ENCODE measurements at regions of chr20 and their contacts with region 1.

Region 1: DNA sequence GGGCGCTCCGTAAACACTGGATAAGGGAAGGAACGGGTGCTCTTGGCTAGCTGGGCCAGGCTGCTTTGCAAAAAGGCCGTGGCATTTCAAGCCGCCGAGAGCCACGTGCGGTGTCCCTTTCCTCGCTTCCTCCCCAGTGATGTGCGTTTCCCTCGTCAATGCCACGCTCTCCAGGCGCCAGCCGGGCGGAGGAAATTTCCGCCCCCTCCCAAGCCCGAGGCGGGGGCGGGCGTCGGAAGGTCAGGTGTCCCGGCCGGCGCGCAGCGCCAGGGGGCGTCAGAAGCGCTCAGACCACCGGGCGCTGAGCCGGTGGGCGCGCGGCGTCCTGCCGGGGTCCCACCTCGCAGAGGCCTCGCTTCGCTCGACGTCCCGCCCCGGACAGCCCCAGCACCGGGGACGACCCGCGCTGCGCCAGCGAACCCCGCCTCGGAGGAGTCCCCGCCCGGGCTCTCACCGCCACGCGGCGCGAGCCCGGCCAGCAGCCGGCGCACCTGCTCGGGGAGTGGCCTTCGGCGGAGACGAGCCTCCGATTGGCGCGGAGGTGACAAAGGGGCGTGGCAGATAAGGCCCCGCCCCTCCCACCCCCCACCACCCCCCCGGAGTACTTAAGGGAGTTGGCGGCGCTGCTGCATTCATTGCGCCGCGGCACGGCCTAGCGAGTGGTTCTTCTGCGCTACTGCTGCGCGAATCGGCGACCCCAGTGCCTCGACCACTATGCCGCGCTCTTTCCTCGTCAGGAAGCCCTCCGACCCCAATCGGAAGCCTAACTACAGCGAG is at the start of gene SNAI1:
- DNase-seq: peak; percentile 77 to 81
- ATAC-seq: peak; percentile 85 to 88 (median 87)
- H3K4me3 ChIP-seq: peak within 1 kb of the TSS; percentile 36 to 75 (median 63)
- H3K27ac ChIP-seq: peak within 1 kb of the TSS in 9 of 10 donors; percentile 66 to 88 (median 80)
- H3K4me1 ChIP-seq: peaks cover 15 to 66% (median 56%) of the 10 kb centered on the region in 9 donors
- H3K27me3 ChIP-seq: peaks cover 0 to 10% (median 0%) of the 10 kb centered on the region in 7 donors
- CTCF ChIP-seq: peak; percentile 41 to 88 (median 61)
- total RNA-seq, gene SNAI1: 0.59 to 7.6 (median 2.8) TPM

Region 2: DNA sequence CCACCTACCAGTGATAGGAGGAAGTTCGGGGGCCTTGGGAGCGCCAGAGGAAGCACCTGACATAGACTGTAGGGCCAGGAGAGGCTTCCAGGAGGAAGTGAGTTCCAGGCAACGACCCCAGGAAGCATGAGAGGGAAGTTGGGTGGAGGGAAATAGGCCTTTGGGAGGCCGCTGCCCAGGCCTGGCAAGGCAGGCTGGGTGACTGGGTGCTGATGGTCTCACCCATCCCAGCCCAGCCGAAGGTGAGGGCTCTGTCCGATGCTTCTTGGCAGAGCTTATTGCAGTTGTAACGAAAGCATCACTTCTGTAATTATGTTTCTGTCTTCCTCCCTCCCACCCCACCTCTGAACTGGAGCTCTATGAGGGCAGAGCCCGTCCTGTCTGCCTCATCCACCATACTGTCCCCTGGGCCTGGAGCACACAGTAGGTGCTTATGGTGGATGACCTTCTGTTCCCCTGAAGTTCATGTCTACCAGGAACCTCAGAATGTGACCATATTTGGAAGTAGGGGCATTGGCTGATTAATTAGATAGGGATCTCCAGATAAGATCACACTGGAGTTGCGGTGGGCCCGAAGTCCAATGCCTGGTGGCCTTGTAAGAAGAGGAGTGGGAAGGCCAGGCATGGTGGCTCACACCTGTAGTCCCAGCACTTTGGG is 76.3 kb after region 1 on chr20:
- intact Hi-C with region 1: no loop called
- DNase-seq: no peak
- ATAC-seq: peak in 3 of 8 donors; percentile 16 to 36 (median 16)
- H3K4me3 ChIP-seq: no peak overlapping the region
- H3K27ac ChIP-seq: no peak overlapping the region
- H3K4me1 ChIP-seq: peaks cover 7 to 20% (median 10%) of the 10 kb centered on the region in 9 donors
- H3K27me3 ChIP-seq: no peaks in the 10 kb centered on the region
- CTCF ChIP-seq: no peak

Region 3: GRCh38 chr20:50070991-50071888 is 88.7 kb after region 1 on chr20:
- intact Hi-C with region 1: loop called (anchors 1 to 2 kb)
- DNase-seq: peak; percentile 85 to 94
- ATAC-seq: peak; percentile 90 to 96 (median 95)
- H3K4me3 ChIP-seq: peak overlapping the region in 9 of 10 donors; percentile 4 to 53 (median 47)
- H3K27ac ChIP-seq: peak overlapping the region in 1 of 10 donors; percentile 73
- H3K4me1 ChIP-seq: peaks cover 0 to 25% (median 8%) of the 10 kb centered on the region in 9 donors
- H3K27me3 ChIP-seq: no peaks in the 10 kb centered on the region
- CTCF ChIP-seq: peak; percentile 99 to 100 (median 100)

Region 4: DNA sequence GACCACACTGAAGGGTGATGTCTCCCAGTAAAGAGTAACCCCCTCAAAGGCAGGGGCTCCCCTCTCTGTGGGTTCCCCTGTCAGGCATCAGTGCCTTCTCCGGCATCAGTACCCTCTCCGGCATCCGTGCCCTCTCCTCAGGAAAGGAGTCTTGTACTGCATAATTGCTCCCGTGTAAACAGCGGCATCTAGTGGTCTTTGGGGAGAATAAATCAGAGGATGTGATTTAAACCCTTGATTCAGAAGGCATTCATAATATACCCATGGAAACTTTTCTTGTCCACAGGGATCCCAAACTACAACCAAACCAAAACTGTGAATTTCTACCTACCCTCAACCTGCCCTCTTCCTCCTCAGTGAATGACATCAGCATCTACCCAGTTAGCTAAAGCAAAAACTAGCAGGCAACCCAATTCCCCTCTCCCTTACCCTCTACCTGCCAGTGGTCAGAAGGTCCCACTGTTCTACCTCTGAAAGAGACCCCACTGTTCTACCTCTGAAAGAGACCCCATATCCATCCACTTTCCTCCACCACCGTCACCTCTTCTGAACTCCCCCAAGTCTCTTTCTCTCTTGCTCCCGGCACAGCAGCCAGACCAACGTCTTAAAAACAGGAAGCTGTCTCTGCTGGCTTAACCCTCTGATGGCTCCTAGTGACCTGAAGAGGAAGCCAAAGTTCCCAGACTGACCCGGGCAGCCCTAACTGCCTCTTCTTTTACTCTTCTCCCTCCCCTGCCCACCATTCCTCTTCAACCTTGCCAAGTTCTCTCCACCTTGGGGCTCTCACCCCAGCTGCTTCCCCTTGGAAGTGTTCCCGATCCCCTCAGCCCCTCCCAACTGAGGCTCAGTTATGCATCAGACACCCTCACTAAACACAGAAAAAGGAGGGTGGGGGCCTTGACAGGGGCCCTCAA is 103.2 kb after region 1 on chr20:
- intact Hi-C with region 1: loop called in 1 of 10 experiments (anchors 5 kb)
- DNase-seq: peak in 1 of 2 donors; percentile 46
- ATAC-seq: peak; percentile 55 to 88 (median 75)
- H3K4me3 ChIP-seq: peak overlapping the region in 6 of 10 donors; percentile 30 to 43 (median 36)
- H3K27ac ChIP-seq: peak overlapping the region in 8 of 10 donors; percentile 41 to 81 (median 52)
- H3K4me1 ChIP-seq: peaks cover 5 to 64% (median 28%) of the 10 kb centered on the region in 9 donors
- H3K27me3 ChIP-seq: no peaks in the 10 kb centered on the region
- CTCF ChIP-seq: peak; percentile 66 to 88 (median 86)

Region 5: GRCh38 chr20:50165684-50166554 is 183.4 kb after region 1 on chr20:
- intact Hi-C with region 1: loop called in 8 of 10 experiments (anchors 2 to 5 kb)
- DNase-seq: peak; percentile 92 to 98
- ATAC-seq: peak; percentile 95 to 99 (median 98)
- H3K4me3 ChIP-seq: peak overlapping the region in 8 of 10 donors; percentile 8 to 49 (median 40)
- H3K27ac ChIP-seq: peak overlapping the region; percentile 26 to 95 (median 88)
- H3K4me1 ChIP-seq: peaks cover 5 to 42% (median 20%) of the 10 kb centered on the region in 9 donors
- H3K27me3 ChIP-seq: no peaks in the 10 kb centered on the region
- CTCF ChIP-seq: peak in 1 of 9 donors; percentile 22

Region 6: GRCh38 chr20:50172347-50173013 is 189.9 kb after region 1 on chr20:
- intact Hi-C with region 1: loop called in 9 of 10 experiments (anchors 2 to 5 kb)
- DNase-seq: peak; percentile 92 to 93
- ATAC-seq: peak; percentile 95 to 98 (median 97)
- H3K4me3 ChIP-seq: peak overlapping the region; percentile 44 to 70 (median 62)
- H3K27ac ChIP-seq: peak overlapping the region; percentile 78 to 97 (median 90)
- H3K4me1 ChIP-seq: peaks cover 0 to 43% (median 18%) of the 10 kb centered on the region in 9 donors
- H3K27me3 ChIP-seq: no peaks in the 10 kb centered on the region
- CTCF ChIP-seq: no peak

Region 7: GRCh38 chr20:50179507-50180016 is 197.0 kb after region 1 on chr20:
- intact Hi-C with region 1: loop called in 6 of 10 experiments (anchors 2 to 5 kb)
- DNase-seq: no peak
- ATAC-seq: peak in 6 of 8 donors; percentile 4 to 50 (median 34)
- H3K4me3 ChIP-seq: no peak overlapping the region
- H3K27ac ChIP-seq: no peak overlapping the region
- H3K4me1 ChIP-seq: peaks cover 0 to 6% (median 0%) of the 10 kb centered on the region in 9 donors
- H3K27me3 ChIP-seq: no peaks in the 10 kb centered on the region
- CTCF ChIP-seq: peak in 7 of 9 donors; percentile 13 to 52 (median 42)